ENCODE measurements at regions of chr12 and their contacts with region 1.

Region 1: GRCh38 chr12:96985480-96986362 is 78.7 kb downstream of the NEDD1 start:
- DNase-seq: peak; percentile 24
- ATAC-seq: peak; percentile 73 to 80

Region 2: GRCh38 chr12:96587691-96588090 is 398.0 kb before region 1 on chr12:
- intact Hi-C with region 1: loop called (anchors 10 kb)
- DNase-seq: no peak
- ATAC-seq: no peak

Region 3: GRCh38 chr12:96846293-96846692 is 139.4 kb before region 1 on chr12:
- intact Hi-C with region 1: no loop called
- DNase-seq: no peak
- ATAC-seq: no peak

Region 4: GRCh38 chr12:96861656-96862055 is 124.1 kb before region 1 on chr12:
- intact Hi-C with region 1: no loop called
- DNase-seq: no peak
- ATAC-seq: no peak

Region 5: DNA sequence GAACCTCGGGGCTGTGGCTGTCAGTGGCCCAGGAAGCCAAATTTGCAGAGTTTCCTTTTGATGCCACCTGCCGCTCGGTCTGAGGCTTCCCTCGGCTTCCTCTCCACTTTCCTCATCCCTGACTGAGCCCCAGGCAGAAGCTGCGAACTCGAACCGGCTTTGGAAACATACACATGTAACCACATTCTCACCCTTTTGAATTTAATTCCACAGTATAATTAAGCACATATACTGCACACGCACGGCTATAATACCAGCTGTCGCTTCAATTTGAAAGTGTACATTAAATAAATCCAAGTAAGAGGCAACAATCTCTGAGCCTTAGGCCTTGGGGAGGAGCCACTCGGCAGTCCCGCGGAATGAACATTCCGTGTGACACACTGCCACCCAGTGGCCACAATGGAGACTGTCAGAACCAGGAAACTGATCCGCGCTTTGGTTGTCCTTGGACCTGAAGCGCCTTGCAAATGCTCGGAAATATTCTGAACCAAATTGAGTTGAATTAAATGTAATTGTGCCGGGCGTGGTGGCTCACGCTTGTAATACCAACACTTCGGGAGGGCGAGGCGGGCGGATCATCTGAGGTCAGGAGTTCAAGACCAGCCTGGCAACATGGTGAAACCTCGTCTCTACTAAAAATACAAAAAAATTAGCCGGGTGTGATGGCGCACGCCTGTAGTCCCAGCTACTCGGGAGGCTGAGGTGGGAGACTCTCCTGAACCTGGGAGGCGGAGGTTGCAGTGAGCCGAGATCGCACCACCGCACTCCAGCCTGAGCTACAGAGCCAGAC is 1411.8 kb after region 1 on chr12:
- intact Hi-C with region 1: loop called in 1 of 2 experiments (anchors 5 kb)
- DNase-seq: peak; percentile 83
- ATAC-seq: peak; percentile 96 to 98

Measured in left cardiac atrium (tissue), 4 donors.